ENCODE measurements at regions of chr9 and their contacts with region 1.

Region 1: GRCh38 chr9:116163293-116164055 is 9.9 kb downstream of the PAPPA start:
- DNase-seq: no peak

Region 2: DNA sequence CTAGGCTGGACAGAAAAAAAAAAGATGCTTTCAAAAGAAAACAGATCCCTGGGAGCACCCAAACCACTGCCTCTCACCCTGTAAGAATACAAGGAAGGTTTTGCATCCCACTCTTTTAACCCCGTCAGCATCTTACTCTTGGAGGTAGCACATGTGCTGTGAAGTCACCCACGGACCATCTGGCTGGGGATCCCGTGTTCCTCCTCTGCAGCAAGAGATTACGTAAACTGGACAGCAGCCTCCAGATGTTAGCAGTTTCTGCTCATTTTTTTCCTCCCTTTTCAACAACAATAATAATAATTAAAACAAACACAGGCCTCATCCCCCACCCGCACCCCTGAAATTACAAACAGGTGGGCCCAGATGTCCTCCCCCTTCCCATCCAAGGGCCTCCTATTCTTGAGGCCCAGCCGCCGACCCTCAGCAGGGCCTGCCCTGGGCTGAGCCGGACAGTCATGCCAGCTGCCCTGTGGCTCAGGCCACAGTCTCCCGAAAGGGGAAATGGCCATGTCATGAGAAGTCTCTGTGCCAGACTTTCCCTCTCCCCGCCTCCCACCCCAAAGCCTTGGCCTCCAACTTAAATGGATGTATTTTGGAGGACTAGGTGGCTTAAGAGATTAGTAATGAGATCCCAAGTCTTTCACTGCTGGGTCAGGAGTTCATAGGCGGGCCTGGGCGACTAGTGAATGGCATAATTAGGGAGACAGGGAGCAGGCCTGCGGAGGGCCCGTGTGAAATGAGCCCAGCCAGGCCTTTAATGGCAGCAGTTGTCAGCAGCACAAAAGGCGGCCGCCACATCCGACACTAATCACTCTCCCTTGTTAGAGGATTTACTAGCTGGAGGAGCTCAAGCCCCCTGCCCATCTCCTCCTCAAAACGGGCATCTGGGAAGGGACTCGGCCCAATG is 155.2 kb after region 1 on chr9:
- intact Hi-C with region 1: loop called (anchors 10 kb)
- DNase-seq: no peak

Region 3: GRCh38 chr9:116494815-116495634 is 331.6 kb after region 1 on chr9:
- intact Hi-C with region 1: loop called (anchors 5 kb)
- DNase-seq: no peak

Region 4: DNA sequence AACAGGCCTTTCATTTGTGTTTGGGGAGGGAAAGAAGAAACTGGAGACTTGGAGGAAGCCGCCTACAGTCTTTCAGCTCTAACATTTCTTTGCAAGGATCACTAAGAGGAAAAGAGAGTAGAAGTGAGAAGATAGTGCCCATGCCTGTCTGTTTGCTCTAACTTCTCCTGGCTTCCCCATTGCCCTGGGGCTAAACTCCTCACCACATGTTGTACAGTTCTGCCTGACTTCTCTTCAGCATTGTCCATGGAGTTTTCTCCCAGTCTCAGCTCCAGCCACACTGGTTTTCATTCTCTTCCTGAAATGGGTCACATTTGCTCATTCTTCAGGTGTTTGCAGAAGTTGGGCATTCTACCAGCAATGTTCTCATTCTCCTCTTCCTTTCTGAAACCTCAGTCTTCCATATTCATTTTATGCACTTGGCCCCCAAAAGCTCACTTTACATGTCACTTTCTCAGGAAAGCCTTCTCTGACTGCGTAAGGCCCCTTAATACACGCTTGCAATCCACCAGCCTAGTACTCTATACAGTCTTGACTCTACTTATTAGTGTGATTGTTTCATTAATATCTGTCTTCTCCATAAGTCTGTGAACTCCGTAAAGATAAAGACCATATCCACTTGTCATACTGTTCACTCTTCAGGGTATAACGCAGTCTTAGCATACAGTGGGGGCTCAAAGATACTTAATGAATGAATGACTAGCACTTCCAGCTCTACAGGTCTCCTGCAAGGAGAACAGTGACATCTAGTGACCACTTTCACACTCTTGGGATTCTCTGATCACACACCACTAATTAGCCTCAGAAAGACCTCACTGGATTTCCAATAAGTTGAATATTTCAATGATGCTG is 483.4 kb after region 1 on chr9:
- intact Hi-C with region 1: loop called (anchors 5 kb)
- DNase-seq: no peak

Measured in cardiac septum (tissue), 1 donor.